Left ventricle myocardium inferior (tissue), 1 donor: ENCODE measurements at regions of chr6 and their contacts with region 1.

Region 1: DNA sequence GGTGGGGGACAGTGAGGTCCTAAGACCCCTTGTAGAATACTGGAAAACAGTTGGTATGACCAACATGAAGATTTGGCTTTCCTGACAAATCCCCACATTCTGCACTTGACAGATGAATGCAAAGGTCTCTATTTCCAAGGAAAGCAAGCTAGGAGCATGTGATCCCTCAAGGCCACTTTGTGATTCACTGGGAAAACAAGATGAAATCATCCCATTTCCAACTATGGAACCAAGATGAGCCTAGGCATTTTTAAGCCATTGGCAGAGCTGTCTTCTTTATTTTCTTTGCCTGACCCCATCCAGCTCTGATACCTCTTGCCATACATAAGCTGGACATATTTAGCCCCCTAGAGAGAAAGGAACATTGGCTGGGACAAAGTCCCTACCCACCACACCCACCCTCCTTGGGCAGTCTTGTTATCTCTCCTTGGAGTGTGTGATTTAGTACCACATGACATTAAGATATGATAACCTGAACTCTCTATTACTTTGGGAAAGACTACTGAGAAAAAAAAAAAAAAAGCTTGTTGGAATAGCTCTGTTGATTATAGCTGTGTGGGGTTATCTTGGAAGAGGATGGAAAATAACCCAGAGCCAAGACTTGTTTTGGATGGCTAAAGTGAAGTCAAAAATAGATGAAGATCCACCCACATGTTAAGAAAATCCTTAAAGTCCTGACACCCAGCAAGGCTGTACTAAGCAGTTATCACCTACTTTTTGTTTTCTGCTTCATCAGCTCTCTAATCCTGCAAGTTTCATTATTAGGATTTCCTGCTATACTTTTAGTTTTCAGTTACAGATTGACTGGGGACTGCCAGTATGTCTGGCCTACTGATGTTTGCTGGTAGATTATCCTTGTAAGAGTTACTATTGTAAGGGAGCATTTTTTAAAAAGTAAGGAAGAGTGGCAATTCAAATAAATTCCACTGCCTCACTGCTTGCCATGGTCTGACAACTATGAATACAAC is 90.1 kb upstream of the PREP start:
- DNase-seq: no peak
- H3K4me3 ChIP-seq: no peak overlapping the region
- H3K27ac ChIP-seq: peak overlapping the region; percentile 68
- H3K4me1 ChIP-seq: peaks cover 53% of the 10 kb centered on the region
- H3K27me3 ChIP-seq: no peaks in the 10 kb centered on the region
- CTCF ChIP-seq: no peak

Region 2: GRCh38 chr6:105560611-105561066 is 67.6 kb after region 1 on chr6:
- intact Hi-C with region 1: no loop called
- DNase-seq: no peak
- H3K4me3 ChIP-seq: no peak overlapping the region
- H3K27ac ChIP-seq: no peak overlapping the region
- H3K4me1 ChIP-seq: no peaks in the 10 kb centered on the region
- H3K27me3 ChIP-seq: no peaks in the 10 kb centered on the region
- CTCF ChIP-seq: no peak

Region 3: GRCh38 chr6:105992315-105992961 is 499.4 kb after region 1 on chr6:
- intact Hi-C with region 1: loop called (anchors 10 kb)
- DNase-seq: peak; percentile 82
- H3K4me3 ChIP-seq: peak overlapping the region; percentile 72
- H3K27ac ChIP-seq: peak overlapping the region; percentile 75
- H3K4me1 ChIP-seq: peaks cover 35% of the 10 kb centered on the region
- H3K27me3 ChIP-seq: peaks cover 100% of the 10 kb centered on the region
- CTCF ChIP-seq: peak; percentile 13